ENCODE measurements at regions of chr6 and their contacts with region 1.

Region 1: DNA sequence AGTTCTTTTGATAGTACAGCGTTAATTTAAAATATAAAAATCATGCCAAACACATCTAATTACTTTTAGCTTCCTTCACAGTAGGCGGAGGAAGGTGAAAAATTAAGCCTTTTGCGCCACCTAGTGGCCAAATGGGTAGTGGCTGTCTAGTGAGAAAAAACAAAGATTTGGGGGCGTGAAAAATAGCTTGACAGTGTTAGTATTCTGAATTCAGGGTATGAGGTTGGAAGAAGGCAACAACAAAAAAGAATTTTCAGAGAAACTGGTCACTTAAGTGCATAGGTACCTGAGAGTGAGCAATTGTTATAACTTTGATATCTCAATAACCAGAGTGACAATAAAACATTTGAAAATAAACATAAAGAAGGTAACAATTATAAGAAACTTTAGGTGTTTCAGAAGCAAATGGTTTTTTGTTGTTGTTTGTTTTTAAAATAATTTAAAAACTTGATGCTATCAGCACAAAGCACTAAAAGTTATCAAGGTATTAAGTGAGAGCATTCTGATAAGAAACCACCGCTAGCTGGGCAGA is 14.3 kb downstream of the PSMB9 start:
- DNase-seq: peak; percentile 90
- H3K4me3 Mint-ChIP-seq: no peak overlapping the region
- H3K27ac Mint-ChIP-seq: no peak overlapping the region
- H3K4me1 Mint-ChIP-seq: peaks cover 33% of the 10 kb centered on the region
- H3K27me3 Mint-ChIP-seq: no peaks in the 10 kb centered on the region

Region 2: DNA sequence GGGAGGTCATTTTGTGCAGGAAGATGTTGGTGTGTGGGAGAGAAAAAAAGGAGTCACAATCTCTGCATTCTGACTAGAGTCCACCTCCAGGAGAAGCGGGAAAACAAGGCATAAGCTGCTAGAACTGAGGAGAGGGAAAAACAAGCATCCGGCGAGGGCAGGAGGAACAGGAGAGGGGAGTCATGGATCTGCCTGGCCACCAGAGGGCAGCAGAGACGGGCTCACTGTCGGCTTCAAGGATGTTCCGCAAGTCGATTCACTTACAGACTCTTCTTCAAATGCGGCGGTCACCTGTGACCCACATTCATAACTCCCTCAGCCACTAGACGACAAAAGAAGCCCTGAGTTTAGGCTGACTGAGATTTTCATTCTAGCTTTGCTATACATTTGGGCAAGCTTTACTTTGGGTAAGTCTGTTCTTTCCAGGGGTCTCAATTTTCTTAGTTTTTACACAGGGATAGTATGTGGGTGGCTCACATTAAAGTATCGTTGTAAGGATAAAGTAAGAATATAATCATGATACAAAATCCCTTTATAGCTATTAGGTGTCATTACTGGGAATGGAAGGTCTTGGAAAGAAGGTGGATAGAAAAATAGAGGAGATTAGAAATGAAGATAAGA is 454.8 kb before region 1 on chr6:
- CTCF ChIA-PET with region 1: interaction called, 24 read pairs
- POLR2A ChIA-PET with region 1: no interaction called
- intact Hi-C with region 1: loop called (anchors 2 kb)
- DNase-seq: peak; percentile 91
- H3K4me3 Mint-ChIP-seq: no peak overlapping the region
- H3K27ac Mint-ChIP-seq: no peak overlapping the region
- H3K4me1 Mint-ChIP-seq: peaks cover 10% of the 10 kb centered on the region
- H3K27me3 Mint-ChIP-seq: peaks cover 42% of the 10 kb centered on the region

Region 3: GRCh38 chr6:32796848-32797776 is 71.2 kb before region 1 on chr6:
- CTCF ChIA-PET with region 1: interaction called, 25 read pairs
- POLR2A ChIA-PET with region 1: no interaction called
- intact Hi-C with region 1: no loop called
- DNase-seq: peak; percentile 84
- H3K4me3 Mint-ChIP-seq: peak overlapping the region; percentile 38
- H3K27ac Mint-ChIP-seq: no peak overlapping the region
- H3K4me1 Mint-ChIP-seq: peaks cover 16% of the 10 kb centered on the region
- H3K27me3 Mint-ChIP-seq: peaks cover 54% of the 10 kb centered on the region

Region 4: GRCh38 chr6:32838114-32838958 is 30.0 kb before region 1 on chr6 and contains the start of gene TAP2:
- CTCF ChIA-PET with region 1: interaction called, 917 read pairs
- POLR2A ChIA-PET with region 1: interaction called, 34 read pairs
- intact Hi-C with region 1: loop called (anchors 1 kb)
- DNase-seq: peak; percentile 98
- H3K4me3 Mint-ChIP-seq: peak within 1 kb of the TSS; percentile 73
- H3K27ac Mint-ChIP-seq: peak within 1 kb of the TSS; percentile 91
- H3K4me1 Mint-ChIP-seq: peaks cover 76% of the 10 kb centered on the region
- H3K27me3 Mint-ChIP-seq: no peaks in the 10 kb centered on the region
- total RNA-seq, gene TAP2: 134 to 143 TPM

Region 5: GRCh38 chr6:32894080-32895005 is 26.0 kb after region 1 on chr6:
- CTCF ChIA-PET with region 1: interaction called, 10 read pairs
- POLR2A ChIA-PET with region 1: interaction called, 5 read pairs
- intact Hi-C with region 1: no loop called
- DNase-seq: peak; percentile 97
- H3K4me3 Mint-ChIP-seq: peak overlapping the region; percentile 98
- H3K27ac Mint-ChIP-seq: peak overlapping the region; percentile 94
- H3K4me1 Mint-ChIP-seq: peaks cover 35% of the 10 kb centered on the region
- H3K27me3 Mint-ChIP-seq: no peaks in the 10 kb centered on the region

Region 6: GRCh38 chr6:32952817-32953739 is 84.8 kb after region 1 on chr6 and contains the start of gene HLA-DMA:
- CTCF ChIA-PET with region 1: interaction called, 14 read pairs
- POLR2A ChIA-PET with region 1: no interaction called
- intact Hi-C with region 1: no loop called
- DNase-seq: peak; percentile 83
- H3K4me3 Mint-ChIP-seq: peak within 1 kb of the TSS; percentile 64
- H3K27ac Mint-ChIP-seq: peak within 1 kb of the TSS; percentile 39
- H3K4me1 Mint-ChIP-seq: peaks cover 51% of the 10 kb centered on the region
- H3K27me3 Mint-ChIP-seq: no peaks in the 10 kb centered on the region
- total RNA-seq, gene HLA-DMA: 9.6 to 10.2 TPM

Measured in activated CD4-positive, alpha-beta memory T cell treated with anti-CD3 and anti-CD28 coated beads for 36 hours (primary cell).